ENCODE measurements at regions of chr13 and their contacts with region 1.

Region 1: DNA sequence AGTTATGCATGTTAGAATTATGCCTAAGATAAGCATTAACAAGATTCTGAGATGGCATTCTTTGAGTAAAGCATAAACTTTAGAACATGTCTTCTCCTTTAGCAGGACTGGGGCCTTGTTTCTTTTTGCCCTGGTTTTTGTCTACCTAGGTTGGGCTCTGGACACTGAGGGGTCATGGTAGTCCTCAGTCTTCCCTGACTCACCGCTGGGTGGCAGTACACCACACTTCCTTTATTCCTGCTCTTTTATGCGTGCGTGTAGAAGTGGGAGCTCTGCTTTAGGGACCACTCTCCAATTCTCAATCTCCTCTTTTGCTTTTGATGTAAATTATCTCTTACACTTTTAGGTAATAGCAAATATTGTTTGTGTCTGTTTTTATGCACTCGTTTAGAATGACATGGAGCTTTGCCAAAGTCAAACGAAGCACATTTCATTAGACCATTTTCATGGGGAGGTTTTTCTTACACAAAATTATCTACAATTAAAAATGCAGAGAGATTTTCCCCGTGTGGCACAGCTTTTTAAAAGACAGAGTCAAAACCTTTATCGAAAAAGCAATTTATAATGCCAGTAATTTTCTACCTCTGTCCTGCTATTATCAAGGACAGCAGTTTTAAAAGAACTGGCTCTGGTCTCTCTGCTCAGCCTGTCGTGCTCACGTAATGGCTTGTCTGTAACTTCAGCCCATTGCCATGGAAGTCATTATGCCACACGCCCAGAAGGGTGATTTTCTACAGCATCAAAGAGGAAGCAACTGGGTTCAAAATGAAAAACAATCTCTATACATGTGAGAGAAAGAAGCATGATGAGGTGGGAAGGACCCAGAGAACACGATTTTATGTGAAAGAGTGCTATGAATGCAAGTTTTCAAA is 413.9 kb downstream of the COG6 start:
- DNase-seq: peak; percentile 46 to 76 (median 64)
- ATAC-seq: peak; percentile 96
- H3K4me3 ChIP-seq: no peak overlapping the region
- H3K4me3 Mint-ChIP-seq: peak overlapping the region; percentile 34 to 86 (median 68)
- H3K27ac ChIP-seq: no peak overlapping the region
- H3K27ac Mint-ChIP-seq: peak overlapping the region; percentile 22 to 88 (median 64)
- H3K4me1 ChIP-seq: peaks cover 0 to 22% of the 10 kb centered on the region in 2 donors
- H3K4me1 Mint-ChIP-seq: peaks cover 6 to 44% (median 29%) of the 10 kb centered on the region in 7 donors
- H3K27me3 ChIP-seq: no peaks in the 10 kb centered on the region
- H3K27me3 Mint-ChIP-seq: no peaks in the 10 kb centered on the region

Region 2: GRCh38 chr13:39684531-39685137 is 384.8 kb before region 1 on chr13:
- CTCF ChIA-PET with region 1: interaction called, 3 read pairs
- POLR2A ChIA-PET with region 1: no interaction called
- intact Hi-C with region 1: loop called in 1 of 2 experiments (anchors 10 kb)
- DNase-seq: peak in 6 of 9 donors; percentile 6 to 44 (median 34)
- ATAC-seq: peak; percentile 53
- H3K4me3 ChIP-seq: no peak overlapping the region
- H3K4me3 Mint-ChIP-seq: no peak overlapping the region
- H3K27ac ChIP-seq: no peak overlapping the region
- H3K27ac Mint-ChIP-seq: no peak overlapping the region
- H3K4me1 ChIP-seq: no peaks in the 10 kb centered on the region
- H3K4me1 Mint-ChIP-seq: peaks cover 0 to 20% (median 3%) of the 10 kb centered on the region in 7 donors
- H3K27me3 ChIP-seq: no peaks in the 10 kb centered on the region
- H3K27me3 Mint-ChIP-seq: no peaks in the 10 kb centered on the region

Region 3: DNA sequence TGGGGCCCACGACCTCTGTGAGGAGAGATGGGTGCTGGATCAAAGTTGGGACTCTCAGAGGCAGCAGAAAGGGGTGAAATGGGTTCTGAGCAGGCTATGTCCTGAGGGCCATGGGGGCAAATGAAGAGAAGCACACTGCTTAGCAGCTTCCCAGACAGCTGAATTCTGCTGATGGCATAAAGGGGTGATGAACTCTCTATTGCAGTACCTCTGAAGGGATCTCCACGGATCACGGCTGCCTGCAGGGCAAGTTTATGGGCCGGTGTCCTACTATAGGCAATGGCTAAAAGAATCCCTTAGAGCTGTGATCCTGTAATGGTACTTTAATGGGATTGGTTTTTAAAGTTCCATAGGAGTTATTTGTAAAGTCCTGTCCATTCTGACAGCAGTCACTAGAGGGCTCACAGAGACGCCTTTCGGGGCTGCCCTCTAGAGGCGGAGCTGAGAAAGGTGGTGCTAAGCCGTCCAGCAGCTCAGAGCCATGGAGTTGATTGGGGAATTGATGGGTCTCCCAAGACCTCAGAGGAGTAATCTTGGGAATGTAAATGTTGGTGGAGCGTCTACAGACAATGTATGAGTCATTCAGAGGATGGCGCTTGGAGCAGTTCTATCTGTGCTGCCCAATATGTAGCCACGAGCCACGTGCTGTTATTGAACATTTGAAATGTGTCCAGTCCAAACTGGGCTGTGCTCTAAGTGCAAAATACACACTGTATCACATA is 126.7 kb before region 1 on chr13:
- CTCF ChIA-PET with region 1: no interaction called
- POLR2A ChIA-PET with region 1: no interaction called
- intact Hi-C with region 1: loop called in 1 of 2 experiments (anchors 1 kb)
- DNase-seq: peak; percentile 41 to 71 (median 63)
- ATAC-seq: peak; percentile 98
- H3K4me3 ChIP-seq: no peak overlapping the region
- H3K4me3 Mint-ChIP-seq: peak overlapping the region in 2 of 10 donors; percentile 2 to 71
- H3K27ac ChIP-seq: no peak overlapping the region
- H3K27ac Mint-ChIP-seq: peak overlapping the region in 3 of 9 donors; percentile 1 to 63 (median 8)
- H3K4me1 ChIP-seq: no peaks in the 10 kb centered on the region
- H3K4me1 Mint-ChIP-seq: peaks cover 4 to 16% (median 11%) of the 10 kb centered on the region in 7 donors
- H3K27me3 ChIP-seq: no peaks in the 10 kb centered on the region
- H3K27me3 Mint-ChIP-seq: peaks cover 0 to 3% (median 0%) of the 10 kb centered on the region in 5 donors

Region 4: GRCh38 chr13:40206241-40207000 is 137.0 kb after region 1 on chr13:
- CTCF ChIA-PET with region 1: interaction called, 9 read pairs
- POLR2A ChIA-PET with region 1: no interaction called
- intact Hi-C with region 1: loop called in 1 of 2 experiments (anchors 1 kb)
- DNase-seq: peak in 8 of 9 donors; percentile 14 to 82 (median 78)
- ATAC-seq: peak; percentile 92
- H3K4me3 ChIP-seq: peak overlapping the region; percentile 19
- H3K4me3 Mint-ChIP-seq: peak overlapping the region; percentile 60 to 86 (median 80)
- H3K27ac ChIP-seq: peak overlapping the region; percentile 73
- H3K27ac Mint-ChIP-seq: peak overlapping the region; percentile 97 to 100 (median 99)
- H3K4me1 ChIP-seq: peaks cover 44 to 70% of the 10 kb centered on the region in 2 donors
- H3K4me1 Mint-ChIP-seq: peaks cover 41 to 88% (median 84%) of the 10 kb centered on the region in 7 donors
- H3K27me3 ChIP-seq: no peaks in the 10 kb centered on the region
- H3K27me3 Mint-ChIP-seq: no peaks in the 10 kb centered on the region

Region 5: DNA sequence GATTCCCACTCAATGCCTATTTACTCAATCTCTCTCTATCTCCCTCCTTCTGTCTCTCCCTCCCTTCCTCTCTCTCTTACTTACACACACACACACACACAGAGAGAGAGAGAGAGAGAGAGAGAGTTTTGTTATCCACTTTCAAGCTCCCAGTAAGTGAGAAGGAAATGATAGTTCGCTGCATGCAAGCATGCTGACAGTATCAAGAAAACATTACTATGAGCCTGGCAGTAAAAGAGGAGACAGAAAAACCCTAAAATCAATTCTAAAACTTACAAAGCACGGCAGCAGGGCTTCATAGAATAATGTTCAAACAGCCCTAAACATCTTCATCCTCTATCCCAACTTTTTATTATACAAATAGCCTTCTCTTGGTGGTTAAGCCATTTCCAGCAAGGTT is 425.1 kb after region 1 on chr13:
- CTCF ChIA-PET with region 1: no interaction called
- POLR2A ChIA-PET with region 1: no interaction called
- intact Hi-C with region 1: loop called in 1 of 2 experiments (anchors 2 kb)
- DNase-seq: peak in 7 of 9 donors; percentile 18 to 64 (median 59)
- ATAC-seq: peak; percentile 66
- H3K4me3 ChIP-seq: peak overlapping the region; percentile 49
- H3K4me3 Mint-ChIP-seq: peak overlapping the region; percentile 76 to 97 (median 85)
- H3K27ac ChIP-seq: peak overlapping the region; percentile 70
- H3K27ac Mint-ChIP-seq: peak overlapping the region; percentile 88 to 98 (median 96)
- H3K4me1 ChIP-seq: peaks cover 38 to 66% of the 10 kb centered on the region in 2 donors
- H3K4me1 Mint-ChIP-seq: peaks cover 54 to 92% (median 85%) of the 10 kb centered on the region in 7 donors
- H3K27me3 ChIP-seq: no peaks in the 10 kb centered on the region
- H3K27me3 Mint-ChIP-seq: no peaks in the 10 kb centered on the region

Region 6: GRCh38 chr13:40589285-40590109 is 520.1 kb after region 1 on chr13:
- CTCF ChIA-PET with region 1: no interaction called
- POLR2A ChIA-PET with region 1: no interaction called
- intact Hi-C with region 1: loop called in 1 of 2 experiments (anchors 5 kb)
- DNase-seq: no peak
- ATAC-seq: peak; percentile 88
- H3K4me3 ChIP-seq: no peak overlapping the region
- H3K4me3 Mint-ChIP-seq: peak overlapping the region; percentile 29 to 85 (median 77)
- H3K27ac ChIP-seq: peak overlapping the region; percentile 25
- H3K27ac Mint-ChIP-seq: peak overlapping the region; percentile 35 to 93 (median 91)
- H3K4me1 ChIP-seq: peaks cover 42 to 75% of the 10 kb centered on the region in 2 donors
- H3K4me1 Mint-ChIP-seq: peaks cover 65 to 100% (median 95%) of the 10 kb centered on the region in 7 donors
- H3K27me3 ChIP-seq: no peaks in the 10 kb centered on the region
- H3K27me3 Mint-ChIP-seq: no peaks in the 10 kb centered on the region

Region 7: GRCh38 chr13:40777166-40777808 is 707.9 kb after region 1 on chr13:
- CTCF ChIA-PET with region 1: no interaction called
- POLR2A ChIA-PET with region 1: no interaction called
- intact Hi-C with region 1: loop called in 1 of 2 experiments (anchors 5 kb)
- DNase-seq: peak in 2 of 9 donors; percentile 15 to 44
- ATAC-seq: peak; percentile 78
- H3K4me3 ChIP-seq: peak overlapping the region; percentile 37
- H3K4me3 Mint-ChIP-seq: peak overlapping the region; percentile 68 to 92 (median 82)
- H3K27ac ChIP-seq: peak overlapping the region; percentile 61
- H3K27ac Mint-ChIP-seq: peak overlapping the region; percentile 94 to 99 (median 97)
- H3K4me1 ChIP-seq: peaks cover 21 to 24% of the 10 kb centered on the region in 2 donors
- H3K4me1 Mint-ChIP-seq: peaks cover 19 to 36% (median 32%) of the 10 kb centered on the region in 7 donors
- H3K27me3 ChIP-seq: no peaks in the 10 kb centered on the region
- H3K27me3 Mint-ChIP-seq: no peaks in the 10 kb centered on the region

Measured in naive thymus-derived CD4-positive, alpha-beta T cell (primary cell).